ENCODE measurements at regions of chr1 and their contacts with region 1.

Region 1: GRCh38 chr1:33633019-33633801 is 160.8 kb downstream of the ZSCAN20 start:
- DNase-seq: peak; percentile 64 to 95
- H3K4me3 ChIP-seq: no peak overlapping the region
- H3K27ac ChIP-seq: no peak overlapping the region
- H3K4me1 ChIP-seq: peaks cover 10 to 18% (median 12%) of the 10 kb centered on the region in 4 experiments
- H3K27me3 ChIP-seq: peaks cover 0 to 2% (median 0%) of the 10 kb centered on the region in 4 experiments; a peak in 1 of 7 replicates
- CTCF ChIP-seq: peak; percentile 99 to 100 (median 100)
- EP300 ChIP-seq: no peak
- POLR2A ChIP-seq: no peak
- RAD21 ChIP-seq: peak; percentile 65 to 71

Region 2: GRCh38 chr1:33654267-33654834 is 21.1 kb after region 1 on chr1:
- CTCF ChIA-PET with region 1: interaction called, 60 read pairs
- POLR2A ChIA-PET with region 1: no interaction called
- DNase-seq: no peak
- H3K4me3 ChIP-seq: no peak overlapping the region
- H3K27ac ChIP-seq: no peak overlapping the region
- H3K4me1 ChIP-seq: no peaks in the 10 kb centered on the region
- H3K27me3 ChIP-seq: no peaks in the 10 kb centered on the region
- CTCF ChIP-seq: peak; percentile 58 to 76 (median 71)
- EP300 ChIP-seq: no peak
- POLR2A ChIP-seq: no peak
- RAD21 ChIP-seq: peak; percentile 56 to 69

Region 3: GRCh38 chr1:33709174-33709782 is 76.1 kb after region 1 on chr1:
- CTCF ChIA-PET with region 1: interaction called, 11 read pairs
- POLR2A ChIA-PET with region 1: no interaction called
- DNase-seq: peak in 1 of 2 experiments; percentile 20
- H3K4me3 ChIP-seq: no peak overlapping the region
- H3K27ac ChIP-seq: no peak overlapping the region
- H3K4me1 ChIP-seq: peaks cover 0 to 3% (median 0%) of the 10 kb centered on the region in 4 experiments; a peak in 1 of 7 replicates
- H3K27me3 ChIP-seq: no peaks in the 10 kb centered on the region
- CTCF ChIP-seq: no peak
- EP300 ChIP-seq: no peak
- POLR2A ChIP-seq: no peak
- RAD21 ChIP-seq: no peak

Region 4: DNA sequence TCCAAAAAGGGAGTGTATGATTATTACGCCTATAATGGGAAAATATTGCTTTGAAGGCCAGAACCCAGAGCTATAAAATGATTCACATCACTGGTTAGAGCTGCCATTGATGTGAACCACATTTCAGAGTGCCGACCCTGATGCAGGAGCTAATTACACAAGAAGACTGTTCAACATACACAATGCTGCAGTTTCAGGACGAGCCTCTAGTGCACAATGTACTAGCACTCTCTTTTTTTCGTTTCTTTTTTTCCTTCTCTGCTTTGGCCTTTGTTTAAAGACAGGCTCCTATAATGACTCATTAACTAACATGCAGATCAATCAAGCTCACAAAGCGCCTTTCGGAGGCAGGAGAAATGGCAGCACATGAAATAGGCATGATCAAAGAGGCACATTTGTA is 164.6 kb after region 1 on chr1:
- CTCF ChIA-PET with region 1: no interaction called
- POLR2A ChIA-PET with region 1: no interaction called
- DNase-seq: no peak
- H3K4me3 ChIP-seq: no peak overlapping the region
- H3K27ac ChIP-seq: no peak overlapping the region
- H3K4me1 ChIP-seq: no peaks in the 10 kb centered on the region
- H3K27me3 ChIP-seq: no peaks in the 10 kb centered on the region
- CTCF ChIP-seq: no peak
- EP300 ChIP-seq: no peak
- POLR2A ChIP-seq: no peak
- RAD21 ChIP-seq: no peak